ENCODE measurements at regions of chr21 and their contacts with region 1.

Region 1: DNA sequence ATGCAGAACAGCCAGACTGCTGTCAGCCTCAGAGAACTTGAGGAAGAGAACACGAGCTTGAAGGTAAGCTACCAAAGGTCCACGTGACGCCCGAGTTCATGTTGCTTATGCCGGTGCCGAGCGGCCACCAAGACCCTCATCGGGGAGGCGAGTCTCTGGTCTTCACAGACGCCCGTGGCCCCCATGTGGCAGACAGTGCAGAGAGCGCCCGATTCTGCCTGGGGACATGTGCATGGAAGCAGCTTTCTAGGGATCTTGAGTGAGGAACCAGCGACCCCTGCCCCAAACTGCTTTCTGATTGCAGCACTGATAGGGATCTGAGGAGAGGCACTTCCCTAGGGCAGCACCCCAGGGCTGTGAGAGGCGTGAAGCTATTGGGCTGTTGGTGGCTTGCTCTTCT is 56.3 kb upstream of the DIP2A start:
- DNase-seq: peak in 1 of 5 donors; percentile 23
- ATAC-seq: peak in 1 of 4 donors; percentile 38
- H3K4me3 ChIP-seq: no peak overlapping the region
- H3K27ac ChIP-seq: no peak overlapping the region
- H3K4me1 ChIP-seq: no peaks in the 10 kb centered on the region
- H3K27me3 ChIP-seq: no peaks in the 10 kb centered on the region
- CTCF ChIP-seq: no peak
- POLR2A ChIP-seq: no peak

Region 2: DNA sequence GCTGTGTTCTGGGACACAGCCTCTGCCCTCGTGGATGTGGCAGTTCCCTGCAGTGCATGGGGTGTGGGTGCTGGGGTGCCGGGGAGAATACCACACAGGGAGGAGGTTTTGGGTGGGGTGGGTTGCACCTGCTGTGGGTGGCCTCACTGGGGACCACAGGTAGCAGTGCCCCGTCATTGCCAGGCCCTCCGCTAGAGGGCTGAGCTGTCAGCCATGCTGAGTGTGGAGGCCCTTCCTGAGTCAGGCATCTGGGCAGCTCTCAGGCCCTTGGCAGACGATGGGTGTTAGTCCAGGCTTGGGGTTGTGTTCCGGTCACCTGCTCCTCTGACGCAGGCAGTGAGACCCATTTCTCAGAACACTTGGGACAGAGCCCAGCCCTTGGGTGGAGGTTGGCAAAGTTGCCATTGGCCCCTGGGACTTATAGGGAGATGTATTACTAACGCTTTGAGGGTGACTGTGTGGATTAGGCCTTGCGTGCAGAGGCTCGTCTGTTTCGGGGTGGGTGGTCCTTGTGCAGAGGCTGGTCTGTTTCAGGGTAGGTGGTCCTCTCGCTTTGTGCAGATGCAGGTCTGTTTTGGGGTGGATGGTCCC is 54.5 kb before region 1 on chr21:
- intact Hi-C with region 1: loop called in 1 of 10 experiments (anchors 10 kb)
- DNase-seq: peak; percentile 73 to 94 (median 79)
- ATAC-seq: peak; percentile 94 to 97 (median 96)
- H3K4me3 ChIP-seq: peak overlapping the region in 3 of 12 donors; percentile 4 to 23 (median 9)
- H3K27ac ChIP-seq: peak overlapping the region in 8 of 12 donors; percentile 6 to 74 (median 49)
- H3K4me1 ChIP-seq: peaks cover 0 to 6% (median 0%) of the 10 kb centered on the region in 12 donors
- H3K27me3 ChIP-seq: no peaks in the 10 kb centered on the region
- CTCF ChIP-seq: peak in 10 of 12 donors; percentile 11 to 63 (median 36)
- POLR2A ChIP-seq: peak in 1 of 2 donors; percentile 34